ENCODE measurements at regions of chr7 and their contacts with region 1.

Region 1: GRCh38 chr7:17427924-17428323 is 129.5 kb downstream of the AHR start:
- DNase-seq: no peak
- H3K4me3 ChIP-seq: no peak overlapping the region
- H3K27ac ChIP-seq: no peak overlapping the region
- H3K4me1 ChIP-seq: peaks cover 0 to 3% (median 0%) of the 10 kb centered on the region in 4 donors
- H3K27me3 ChIP-seq: no peaks in the 10 kb centered on the region
- CTCF ChIP-seq: no peak
- EP300 ChIP-seq: no peak
- POLR2A ChIP-seq: no peak

Region 2: DNA sequence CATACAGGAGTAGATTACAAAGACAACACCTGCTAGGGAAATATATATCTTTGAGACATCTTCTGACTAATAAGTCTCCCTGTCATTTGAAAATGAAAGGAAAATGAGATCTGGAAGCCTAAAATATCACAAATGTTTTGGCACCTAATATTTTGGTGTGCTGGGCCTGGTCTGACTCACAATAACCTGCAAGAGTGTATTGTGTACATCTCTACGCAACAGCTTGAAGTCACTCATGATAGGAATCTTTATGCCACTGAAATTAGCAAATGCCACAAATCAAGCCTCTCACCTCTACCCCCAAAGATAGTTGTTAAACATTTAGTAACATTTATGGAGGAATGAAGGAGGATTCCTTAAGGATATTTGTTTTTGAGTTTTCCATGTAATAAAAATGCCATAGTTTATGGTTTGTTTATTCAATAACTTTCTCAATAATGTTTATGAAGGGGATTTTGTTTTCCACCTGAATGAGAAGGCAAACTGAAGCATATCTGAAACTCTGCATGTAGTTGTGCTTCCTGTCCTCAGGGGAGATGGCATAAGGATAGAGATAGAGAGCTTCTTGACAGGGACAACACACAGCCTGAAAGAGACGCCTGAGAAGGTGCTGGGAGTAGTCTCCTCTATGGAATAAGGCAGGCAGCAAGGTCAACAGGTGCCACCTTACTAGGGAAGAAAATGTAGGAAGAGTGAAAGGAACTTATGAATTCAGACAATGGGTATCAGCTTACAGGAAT is 67.9 kb after region 1 on chr7:
- in situ Hi-C with region 1: no loop called
- intact Hi-C with region 1: no loop called
- DNase-seq: no peak
- H3K4me3 ChIP-seq: no peak overlapping the region
- H3K27ac ChIP-seq: no peak overlapping the region
- H3K4me1 ChIP-seq: peaks cover 0 to 9% (median 3%) of the 10 kb centered on the region in 4 donors
- H3K27me3 ChIP-seq: no peaks in the 10 kb centered on the region
- CTCF ChIP-seq: no peak
- EP300 ChIP-seq: no peak
- POLR2A ChIP-seq: no peak

Region 3: DNA sequence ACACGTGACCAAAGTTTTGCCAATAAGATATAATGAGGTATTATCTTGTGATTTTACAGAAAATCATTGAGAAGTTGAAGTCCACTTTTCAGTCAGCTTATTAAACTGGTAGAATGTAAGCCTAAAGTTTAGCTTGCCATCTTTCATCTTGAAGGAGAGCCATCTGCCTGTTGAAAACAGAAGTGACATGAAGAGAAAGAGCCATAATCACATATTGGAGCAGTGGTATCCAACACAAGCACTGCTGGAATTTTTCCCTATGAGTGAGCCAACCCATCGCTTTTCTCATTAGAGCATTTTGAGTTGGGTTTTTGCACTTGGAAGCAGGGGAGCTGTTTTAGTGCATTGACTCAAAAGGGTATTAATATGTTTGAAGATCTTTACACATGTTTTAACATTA is 1834.9 kb after region 1 on chr7:
- in situ Hi-C with region 1: no loop called
- intact Hi-C with region 1: loop called (anchors 5 kb)
- DNase-seq: no peak
- H3K4me3 ChIP-seq: no peak overlapping the region
- H3K27ac ChIP-seq: no peak overlapping the region
- H3K4me1 ChIP-seq: no peaks in the 10 kb centered on the region
- H3K27me3 ChIP-seq: no peaks in the 10 kb centered on the region
- CTCF ChIP-seq: no peak
- EP300 ChIP-seq: no peak
- POLR2A ChIP-seq: no peak

Measured in transverse colon (tissue), 4 donors.